Ovary (tissue), 10 donors: ENCODE measurements at regions of chr6 and their contacts with region 1.

Region 1: GRCh38 chr6:160534050-160534696 is 129.9 kb downstream of the LPA start:
- DNase-seq: peak; percentile 28 to 73 (median 68)
- H3K4me3 ChIP-seq: no peak overlapping the region
- H3K27ac ChIP-seq: no peak overlapping the region
- H3K4me1 ChIP-seq: peaks cover 2% of the 10 kb centered on the region
- H3K27me3 ChIP-seq: no peaks in the 10 kb centered on the region
- CTCF ChIP-seq: peak; percentile 81 to 86 (median 85)
- EP300 ChIP-seq: no peak
- POLR2A ChIP-seq: no peak

Region 2: GRCh38 chr6:160088069-160088783 is 445.9 kb before region 1 on chr6:
- intact Hi-C with region 1: loop called in 1 of 4 experiments (anchors 5 kb)
- DNase-seq: peak; percentile 76 to 85 (median 82)
- H3K4me3 ChIP-seq: no peak overlapping the region
- H3K27ac ChIP-seq: no peak overlapping the region
- H3K4me1 ChIP-seq: no peaks in the 10 kb centered on the region
- H3K27me3 ChIP-seq: no peaks in the 10 kb centered on the region
- CTCF ChIP-seq: peak; percentile 48 to 80 (median 68)
- EP300 ChIP-seq: no peak
- POLR2A ChIP-seq: no peak

Region 3: DNA sequence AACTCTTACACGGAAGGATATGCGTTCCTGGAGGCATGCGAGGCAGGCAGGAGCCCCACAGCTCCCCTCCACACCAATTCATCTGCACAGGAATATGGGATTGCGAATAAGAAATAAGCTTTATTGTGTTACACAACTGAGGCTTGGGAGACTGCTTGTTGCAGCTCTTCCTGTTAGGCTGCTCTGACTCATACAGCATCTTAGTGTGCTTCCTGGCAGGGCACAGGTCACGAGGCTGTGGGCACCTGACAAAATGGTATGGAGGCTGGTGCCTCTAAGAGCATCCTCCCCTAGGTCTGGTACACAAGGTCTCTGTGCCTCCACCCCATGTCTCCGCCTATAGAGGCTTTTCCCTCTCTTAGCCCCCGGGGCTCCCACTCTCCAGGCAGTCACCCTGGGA is 179.2 kb before region 1 on chr6:
- intact Hi-C with region 1: no loop called
- DNase-seq: no peak
- H3K4me3 ChIP-seq: no peak overlapping the region
- H3K27ac ChIP-seq: no peak overlapping the region
- H3K4me1 ChIP-seq: no peaks in the 10 kb centered on the region
- H3K27me3 ChIP-seq: no peaks in the 10 kb centered on the region
- CTCF ChIP-seq: no peak
- EP300 ChIP-seq: no peak
- POLR2A ChIP-seq: no peak

Region 4: DNA sequence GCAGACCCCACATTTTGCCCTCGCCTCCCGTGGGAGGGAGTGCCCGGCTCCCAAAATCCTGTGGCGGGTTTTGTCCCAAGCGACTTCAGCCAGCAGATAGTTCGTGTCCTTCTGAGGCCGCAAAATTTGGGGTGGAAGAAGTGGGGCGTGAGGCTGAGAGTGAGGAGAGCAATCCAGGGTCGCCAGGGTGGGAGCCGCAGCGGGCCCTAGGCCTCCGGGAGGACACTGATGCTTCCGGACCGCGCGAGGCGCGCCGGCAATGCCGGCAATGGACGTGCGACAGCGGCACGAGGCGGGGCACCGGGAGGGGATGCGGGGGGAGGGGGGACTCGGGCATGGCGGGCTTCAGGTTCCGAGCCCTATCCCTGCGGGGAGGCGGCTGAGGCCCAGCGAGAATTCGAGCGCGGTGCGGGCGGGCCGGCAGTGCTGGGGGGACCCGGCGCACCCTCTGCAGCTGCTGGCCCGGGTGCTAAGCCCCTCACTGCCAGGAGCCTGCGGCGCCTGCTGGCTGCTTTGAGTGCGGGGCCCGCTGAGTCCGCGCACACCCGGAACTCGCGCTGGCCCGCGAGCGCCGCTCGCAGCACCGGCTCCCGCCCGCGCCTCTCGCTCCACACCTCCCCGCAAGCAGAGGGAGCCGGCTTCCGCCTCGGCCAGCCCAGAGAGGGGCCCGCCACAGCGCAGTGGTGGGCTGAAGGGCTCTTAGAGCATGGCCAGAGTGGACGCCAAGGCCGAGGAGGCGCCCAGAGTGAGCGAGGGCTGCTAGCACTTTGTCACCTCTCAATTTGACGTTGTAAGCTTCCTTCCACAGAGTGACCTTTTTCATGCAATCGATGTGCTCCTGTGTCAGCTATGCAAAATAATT is 13.9 kb before region 1 on chr6:
- intact Hi-C with region 1: no loop called
- DNase-seq: peak; percentile 72 to 88 (median 82)
- H3K4me3 ChIP-seq: peak overlapping the region; percentile 63
- H3K27ac ChIP-seq: peak overlapping the region; percentile 64 to 73
- H3K4me1 ChIP-seq: no peaks in the 10 kb centered on the region
- H3K27me3 ChIP-seq: no peaks in the 10 kb centered on the region
- CTCF ChIP-seq: peak in 2 of 3 donors; percentile 88 to 90
- EP300 ChIP-seq: no peak
- POLR2A ChIP-seq: no peak

Region 5: DNA sequence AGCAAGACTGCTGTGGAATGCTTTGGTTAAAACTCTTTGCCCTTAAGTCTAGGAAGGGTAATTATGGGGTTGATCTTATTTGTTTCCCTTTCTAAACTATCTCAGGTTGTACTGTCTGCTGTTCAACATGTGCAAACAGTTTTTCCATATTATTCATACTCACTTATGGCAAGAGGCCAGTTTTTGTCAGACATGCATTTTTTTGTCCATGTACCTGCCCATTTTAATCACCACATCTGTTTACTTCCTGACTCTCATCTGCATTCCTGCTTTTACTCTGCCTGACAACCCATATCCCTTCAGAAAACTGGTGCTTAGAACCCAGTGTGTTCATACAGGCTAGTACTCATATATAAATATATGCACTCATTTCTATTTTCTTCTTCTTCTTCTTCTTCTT is 49.6 kb after region 1 on chr6:
- intact Hi-C with region 1: no loop called
- DNase-seq: no peak
- H3K4me3 ChIP-seq: no peak overlapping the region
- H3K27ac ChIP-seq: no peak overlapping the region
- H3K4me1 ChIP-seq: no peaks in the 10 kb centered on the region
- H3K27me3 ChIP-seq: no peaks in the 10 kb centered on the region
- CTCF ChIP-seq: no peak
- EP300 ChIP-seq: no peak
- POLR2A ChIP-seq: no peak

Region 6: GRCh38 chr6:160882706-160883359 is 348.7 kb after region 1 on chr6:
- intact Hi-C with region 1: no loop called
- DNase-seq: no peak
- H3K4me3 ChIP-seq: no peak overlapping the region
- H3K27ac ChIP-seq: no peak overlapping the region
- H3K4me1 ChIP-seq: peaks cover 3% of the 10 kb centered on the region
- H3K27me3 ChIP-seq: no peaks in the 10 kb centered on the region
- CTCF ChIP-seq: no peak
- EP300 ChIP-seq: no peak
- POLR2A ChIP-seq: no peak